Naive thymus-derived CD4-positive, alpha-beta T cell (primary cell): ENCODE measurements at regions of chr13 and their contacts with region 1.

Region 1: DNA sequence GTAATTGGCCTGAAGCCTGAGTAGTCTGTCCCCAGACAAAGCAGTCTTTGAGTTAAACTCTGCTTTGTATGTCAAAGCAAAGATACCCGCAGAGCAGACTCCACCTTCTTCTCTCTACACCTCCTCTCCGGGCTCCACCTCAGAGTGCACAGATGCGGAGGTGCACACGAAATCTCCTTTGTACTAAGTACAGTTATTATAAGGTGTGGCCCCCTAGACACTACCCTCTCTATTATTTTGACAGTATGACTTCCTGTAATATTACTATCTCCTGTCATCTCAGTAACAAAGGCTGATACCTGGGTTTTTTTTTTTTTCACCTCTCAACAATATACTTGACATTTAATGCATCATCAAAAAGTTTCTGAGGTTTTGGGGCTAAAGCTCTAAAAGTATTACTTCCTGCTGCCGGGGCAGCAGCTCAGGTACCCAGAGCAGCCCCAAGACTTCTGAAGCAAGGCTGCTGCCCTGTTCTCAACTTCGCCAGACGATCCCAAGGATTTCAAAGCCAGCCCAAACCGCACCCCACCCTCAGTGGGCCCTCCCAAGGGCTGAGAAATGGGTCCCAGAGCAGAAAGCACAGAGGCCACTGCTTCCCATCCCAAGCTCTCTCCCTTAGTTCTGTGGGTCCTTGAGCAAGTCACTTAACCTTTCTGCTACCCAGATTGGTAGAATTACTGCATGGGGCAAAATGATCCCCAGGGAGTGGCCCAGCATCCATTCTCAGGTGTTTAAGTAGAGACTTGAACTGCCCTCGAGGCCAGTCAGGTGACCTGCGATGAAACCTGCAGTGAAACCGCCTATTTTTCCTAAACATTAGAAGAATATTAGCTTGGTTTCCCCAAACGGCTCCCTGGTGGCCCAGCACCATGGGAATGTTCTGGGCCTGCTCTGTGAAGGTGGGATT is 180.6 kb downstream of the FOXO1 start:
- DNase-seq: peak; percentile 29 to 93 (median 88)
- ATAC-seq: peak; percentile 97
- H3K4me3 ChIP-seq: peak overlapping the region; percentile 28
- H3K4me3 Mint-ChIP-seq: peak overlapping the region; percentile 67 to 88 (median 78)
- H3K27ac ChIP-seq: peak overlapping the region; percentile 71
- H3K27ac Mint-ChIP-seq: peak overlapping the region; percentile 91 to 100 (median 96)
- H3K4me1 ChIP-seq: peaks cover 45 to 89% of the 10 kb centered on the region in 2 donors
- H3K4me1 Mint-ChIP-seq: peaks cover 61 to 99% (median 90%) of the 10 kb centered on the region in 7 donors
- H3K27me3 ChIP-seq: no peaks in the 10 kb centered on the region
- H3K27me3 Mint-ChIP-seq: no peaks in the 10 kb centered on the region

Region 2: GRCh38 chr13:39777527-39778061 is 708.3 kb before region 1 on chr13:
- CTCF ChIA-PET with region 1: no interaction called
- POLR2A ChIA-PET with region 1: no interaction called
- intact Hi-C with region 1: loop called in 1 of 2 experiments (anchors 5 kb)
- DNase-seq: peak in 7 of 9 donors; percentile 7 to 58 (median 48)
- ATAC-seq: peak; percentile 62
- H3K4me3 ChIP-seq: no peak overlapping the region
- H3K4me3 Mint-ChIP-seq: peak overlapping the region in 2 of 10 donors; percentile 6 to 18
- H3K27ac ChIP-seq: no peak overlapping the region
- H3K27ac Mint-ChIP-seq: peak overlapping the region in 8 of 9 donors; percentile 8 to 60 (median 18)
- H3K4me1 ChIP-seq: peaks cover 0 to 22% of the 10 kb centered on the region in 2 donors
- H3K4me1 Mint-ChIP-seq: peaks cover 12 to 40% (median 36%) of the 10 kb centered on the region in 7 donors
- H3K27me3 ChIP-seq: no peaks in the 10 kb centered on the region
- H3K27me3 Mint-ChIP-seq: no peaks in the 10 kb centered on the region

Region 3: DNA sequence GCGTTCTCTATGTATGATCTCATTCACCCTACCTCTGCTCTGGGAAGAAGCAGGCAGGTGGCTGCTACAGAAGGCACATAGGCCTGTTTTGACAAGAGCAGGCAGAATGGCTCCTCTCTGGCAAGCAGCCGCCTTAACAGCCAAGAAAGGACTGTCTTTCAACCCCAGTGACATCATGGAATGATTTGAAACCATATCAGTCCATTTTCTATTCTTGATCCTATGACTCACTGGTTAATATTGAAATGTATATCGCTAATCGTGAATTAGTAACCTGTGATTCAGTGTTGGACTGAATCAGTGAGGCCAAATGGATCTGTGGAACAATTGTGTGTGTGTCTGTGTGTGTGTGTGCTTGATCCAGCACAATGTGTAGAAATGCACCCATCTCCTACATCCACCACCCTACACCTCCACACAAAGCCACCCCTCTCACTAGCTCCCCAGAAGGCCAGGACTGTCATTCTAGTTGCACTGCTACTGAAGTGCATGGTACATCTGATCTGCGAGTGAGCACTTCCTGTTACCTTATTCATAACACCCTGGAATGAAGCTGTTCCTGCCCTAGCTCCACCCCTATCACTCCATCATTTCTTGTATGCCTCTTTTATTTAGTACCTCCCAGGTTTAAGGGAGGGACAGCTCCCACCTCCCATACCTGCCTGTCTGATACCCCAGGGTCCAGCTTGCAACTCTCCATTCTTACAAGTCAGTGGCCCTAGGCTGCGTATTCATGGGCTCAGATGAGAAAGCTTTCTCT is 279.4 kb before region 1 on chr13:
- CTCF ChIA-PET with region 1: interaction called, 3 read pairs
- POLR2A ChIA-PET with region 1: interaction called, 3 read pairs
- intact Hi-C with region 1: loop called in 1 of 2 experiments (anchors 1 kb)
- DNase-seq: peak in 8 of 9 donors; percentile 14 to 82 (median 78)
- ATAC-seq: peak; percentile 92
- H3K4me3 ChIP-seq: peak overlapping the region; percentile 19
- H3K4me3 Mint-ChIP-seq: peak overlapping the region; percentile 60 to 86 (median 80)
- H3K27ac ChIP-seq: peak overlapping the region; percentile 73
- H3K27ac Mint-ChIP-seq: peak overlapping the region; percentile 97 to 100 (median 99)
- H3K4me1 ChIP-seq: peaks cover 44 to 70% of the 10 kb centered on the region in 2 donors
- H3K4me1 Mint-ChIP-seq: peaks cover 41 to 88% (median 84%) of the 10 kb centered on the region in 7 donors
- H3K27me3 ChIP-seq: no peaks in the 10 kb centered on the region
- H3K27me3 Mint-ChIP-seq: no peaks in the 10 kb centered on the region

Region 4: DNA sequence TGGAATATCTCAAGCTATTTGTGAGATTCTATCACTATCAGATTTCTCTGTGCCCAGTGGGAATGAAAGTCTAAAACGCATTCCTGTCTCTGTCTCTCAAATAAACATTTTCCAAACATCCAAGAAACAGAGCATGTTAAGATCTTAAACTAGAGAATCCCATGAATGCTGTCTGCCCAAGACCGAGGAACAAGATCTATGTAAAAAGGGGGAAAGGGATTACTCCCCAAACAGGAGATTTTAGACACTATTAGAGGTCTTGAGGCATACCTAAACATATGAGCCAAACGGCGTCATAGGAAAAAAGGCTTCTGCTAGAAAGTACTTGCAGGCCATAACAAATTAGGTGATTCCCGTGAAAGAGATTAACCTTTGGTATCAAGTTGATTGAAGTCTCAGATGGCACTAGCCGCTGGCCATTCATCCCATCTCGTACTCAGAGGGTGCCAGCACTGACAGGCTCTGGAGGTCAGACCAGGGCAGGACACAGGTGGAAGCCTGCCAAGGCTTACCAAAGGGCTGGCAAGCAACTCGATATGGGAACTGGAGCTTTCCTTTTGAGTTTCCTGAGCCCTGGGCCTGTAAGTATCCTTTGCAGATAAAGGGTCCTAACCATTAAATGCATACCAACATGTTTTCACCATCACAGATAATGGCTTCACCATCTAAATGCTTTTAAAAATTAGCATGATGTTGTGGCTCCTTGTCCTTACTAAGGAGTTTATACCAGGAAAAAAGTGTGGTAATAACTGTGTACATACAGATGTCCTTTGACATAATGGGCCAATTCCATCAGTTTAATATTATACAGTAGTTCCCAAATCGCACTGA is 44.7 kb before region 1 on chr13:
- CTCF ChIA-PET with region 1: no interaction called
- POLR2A ChIA-PET with region 1: interaction called, 4 read pairs
- intact Hi-C with region 1: loop called in 1 of 2 experiments (anchors 1 kb)
- DNase-seq: no peak
- ATAC-seq: no peak
- H3K4me3 ChIP-seq: no peak overlapping the region
- H3K4me3 Mint-ChIP-seq: no peak overlapping the region
- H3K27ac ChIP-seq: no peak overlapping the region
- H3K27ac Mint-ChIP-seq: no peak overlapping the region
- H3K4me1 ChIP-seq: peaks cover 4 to 24% of the 10 kb centered on the region in 2 donors
- H3K4me1 Mint-ChIP-seq: peaks cover 16 to 33% (median 28%) of the 10 kb centered on the region in 7 donors
- H3K27me3 ChIP-seq: no peaks in the 10 kb centered on the region
- H3K27me3 Mint-ChIP-seq: no peaks in the 10 kb centered on the region

Region 5: DNA sequence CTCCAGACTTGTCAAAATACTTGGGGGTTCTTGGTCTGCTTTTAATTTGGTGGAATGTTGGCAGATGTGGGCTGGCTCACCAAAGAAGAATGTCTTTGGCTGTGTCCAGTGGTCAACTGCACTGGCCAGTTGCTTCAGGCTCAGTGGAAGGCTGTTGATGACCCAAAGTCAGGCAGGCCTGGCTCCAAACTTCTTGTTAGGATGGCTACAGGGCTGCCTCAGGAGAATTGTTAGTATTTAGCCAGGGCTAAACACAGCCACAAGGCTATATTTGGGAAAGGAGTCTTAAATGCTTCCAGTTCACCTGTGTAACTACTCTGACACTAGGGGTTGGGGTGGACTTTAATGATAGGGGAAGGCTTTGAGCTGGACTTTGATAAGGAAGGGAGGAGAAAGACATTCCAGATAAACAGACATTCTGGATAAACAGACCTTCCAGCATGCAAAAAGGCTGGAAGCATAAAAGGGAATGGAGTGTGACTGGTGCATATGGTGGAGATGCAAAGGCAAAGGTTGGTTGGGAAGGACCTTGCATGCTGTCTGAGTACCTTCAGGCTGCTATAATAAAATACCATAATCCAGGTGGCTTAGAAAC is 63.7 kb after region 1 on chr13:
- CTCF ChIA-PET with region 1: no interaction called
- POLR2A ChIA-PET with region 1: no interaction called
- intact Hi-C with region 1: loop called in 1 of 2 experiments (anchors 5 kb)
- DNase-seq: no peak
- ATAC-seq: no peak
- H3K4me3 ChIP-seq: no peak overlapping the region
- H3K4me3 Mint-ChIP-seq: no peak overlapping the region
- H3K27ac ChIP-seq: peak overlapping the region; percentile 4
- H3K27ac Mint-ChIP-seq: peak overlapping the region in 5 of 9 donors; percentile 4 to 77 (median 30)
- H3K4me1 ChIP-seq: peaks cover 0 to 17% of the 10 kb centered on the region in 2 donors
- H3K4me1 Mint-ChIP-seq: peaks cover 22 to 59% (median 46%) of the 10 kb centered on the region in 7 donors
- H3K27me3 ChIP-seq: no peaks in the 10 kb centered on the region
- H3K27me3 Mint-ChIP-seq: no peaks in the 10 kb centered on the region

Region 6: DNA sequence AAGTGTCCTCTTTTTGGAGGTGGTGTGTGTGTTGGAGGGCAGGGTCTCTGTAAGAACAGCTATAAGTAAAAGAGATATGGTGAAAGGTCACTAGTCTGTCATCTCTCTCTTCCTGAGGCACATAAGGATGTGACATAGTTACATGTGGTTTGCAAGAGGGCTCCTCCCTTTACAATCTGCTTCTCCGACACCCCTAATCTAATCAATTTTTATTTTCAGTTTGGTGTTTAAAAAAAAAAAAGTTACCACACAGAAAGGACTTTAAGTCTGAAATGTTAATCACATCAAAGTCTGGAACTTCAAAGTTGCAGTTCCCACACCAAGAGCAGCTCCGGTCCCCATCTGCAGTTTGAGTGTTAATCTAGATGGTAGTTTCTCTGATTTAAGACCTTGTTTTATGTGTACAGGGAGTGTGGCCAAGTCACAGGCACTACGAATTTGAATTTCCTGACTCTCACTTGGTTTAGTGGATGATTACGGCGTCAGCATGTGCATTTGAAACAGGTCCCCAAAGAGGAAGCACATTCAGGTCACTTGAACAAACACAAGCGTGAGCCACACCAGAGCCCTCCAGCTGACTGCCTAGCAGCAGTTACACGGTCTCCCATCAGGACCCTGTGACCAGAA is 127.4 kb after region 1 on chr13:
- CTCF ChIA-PET with region 1: no interaction called
- POLR2A ChIA-PET with region 1: interaction called, 3 read pairs
- intact Hi-C with region 1: loop called in 1 of 2 experiments (anchors 1 kb)
- DNase-seq: peak in 8 of 9 donors; percentile 44 to 76 (median 64)
- ATAC-seq: peak; percentile 86
- H3K4me3 ChIP-seq: peak overlapping the region; percentile 26
- H3K4me3 Mint-ChIP-seq: peak overlapping the region; percentile 72 to 88 (median 82)
- H3K27ac ChIP-seq: peak overlapping the region; percentile 72
- H3K27ac Mint-ChIP-seq: peak overlapping the region; percentile 76 to 98 (median 92)
- H3K4me1 ChIP-seq: peaks cover 64 to 83% of the 10 kb centered on the region in 2 donors
- H3K4me1 Mint-ChIP-seq: peaks cover 59 to 100% (median 95%) of the 10 kb centered on the region in 7 donors
- H3K27me3 ChIP-seq: no peaks in the 10 kb centered on the region
- H3K27me3 Mint-ChIP-seq: no peaks in the 10 kb centered on the region

Region 7: DNA sequence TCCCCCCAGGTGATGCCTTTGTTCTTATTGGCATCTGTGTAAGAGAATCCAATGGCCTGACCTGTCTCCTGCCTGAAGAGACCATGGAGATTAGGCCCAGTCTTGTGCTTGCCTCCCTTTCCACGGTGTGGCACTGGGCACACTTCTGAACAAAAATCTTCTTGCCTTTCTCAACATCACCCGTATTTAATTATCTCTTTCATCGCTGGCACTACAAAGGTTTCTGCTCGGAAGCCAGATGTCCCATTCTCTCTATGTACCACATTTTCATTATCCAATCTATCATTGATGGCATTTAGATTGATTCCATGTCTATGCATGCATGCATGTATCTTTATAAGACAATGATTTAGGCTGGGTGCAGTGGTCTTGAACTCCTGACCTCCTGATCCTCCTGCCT is 377.9 kb after region 1 on chr13:
- CTCF ChIA-PET with region 1: no interaction called
- POLR2A ChIA-PET with region 1: no interaction called
- intact Hi-C with region 1: no loop called
- DNase-seq: no peak
- ATAC-seq: no peak
- H3K4me3 ChIP-seq: no peak overlapping the region
- H3K4me3 Mint-ChIP-seq: no peak overlapping the region
- H3K27ac ChIP-seq: no peak overlapping the region
- H3K27ac Mint-ChIP-seq: no peak overlapping the region
- H3K4me1 ChIP-seq: no peaks in the 10 kb centered on the region
- H3K4me1 Mint-ChIP-seq: no peaks in the 10 kb centered on the region
- H3K27me3 ChIP-seq: no peaks in the 10 kb centered on the region
- H3K27me3 Mint-ChIP-seq: peaks cover 0 to 2% (median 0%) of the 10 kb centered on the region in 5 donors